ENCODE measurements at regions of chr6 and their contacts with region 1.

Region 1: GRCh38 chr6:16128759-16129622 is at the start of gene MYLIP:
- DNase-seq: peak; percentile 93 to 97 (median 96)
- ATAC-seq: peak; percentile 93
- H3K4me3 ChIP-seq: peak within 1 kb of the TSS; percentile 91
- H3K4me3 Mint-ChIP-seq: peak within 1 kb of the TSS; percentile 93 to 100 (median 96)
- H3K27ac ChIP-seq: peak within 1 kb of the TSS; percentile 97
- H3K27ac Mint-ChIP-seq: peak within 1 kb of the TSS; percentile 76 to 98 (median 95)
- H3K4me1 ChIP-seq: peaks cover 30 to 39% of the 10 kb centered on the region in 2 donors
- H3K4me1 Mint-ChIP-seq: peaks cover 20 to 50% (median 35%) of the 10 kb centered on the region in 7 donors
- H3K27me3 ChIP-seq: no peaks in the 10 kb centered on the region
- H3K27me3 Mint-ChIP-seq: peaks cover 0 to 25% (median 0%) of the 10 kb centered on the region in 5 donors
- total RNA-seq, gene MYLIP: 17.8 to 215 (median 23.0) TPM

Region 2: GRCh38 chr6:14276667-14277404 is 1852.2 kb before region 1 on chr6:
- CTCF ChIA-PET with region 1: no interaction called
- POLR2A ChIA-PET with region 1: no interaction called
- intact Hi-C with region 1: loop called in 1 of 2 experiments (anchors 10 kb)
- DNase-seq: peak in 7 of 9 donors; percentile 73 to 90 (median 85)
- ATAC-seq: peak; percentile 99
- H3K4me3 ChIP-seq: peak overlapping the region; percentile 34
- H3K4me3 Mint-ChIP-seq: peak overlapping the region; percentile 72 to 96 (median 80)
- H3K27ac ChIP-seq: peak overlapping the region; percentile 47
- H3K27ac Mint-ChIP-seq: peak overlapping the region; percentile 82 to 97 (median 91)
- H3K4me1 ChIP-seq: peaks cover 20 to 39% of the 10 kb centered on the region in 2 donors
- H3K4me1 Mint-ChIP-seq: peaks cover 33 to 64% (median 55%) of the 10 kb centered on the region in 7 donors
- H3K27me3 ChIP-seq: no peaks in the 10 kb centered on the region
- H3K27me3 Mint-ChIP-seq: no peaks in the 10 kb centered on the region

Region 3: GRCh38 chr6:15691250-15691869 is 437.6 kb before region 1 on chr6:
- CTCF ChIA-PET with region 1: interaction called, 3 read pairs
- POLR2A ChIA-PET with region 1: interaction called, 3 read pairs
- intact Hi-C with region 1: loop called (anchors 1 kb)
- DNase-seq: peak; percentile 56 to 84 (median 76)
- ATAC-seq: peak; percentile 100
- H3K4me3 ChIP-seq: no peak overlapping the region
- H3K4me3 Mint-ChIP-seq: peak overlapping the region in 2 of 10 donors; percentile 25 to 56
- H3K27ac ChIP-seq: no peak overlapping the region
- H3K27ac Mint-ChIP-seq: peak overlapping the region in 3 of 9 donors; percentile 1 to 23 (median 4)
- H3K4me1 ChIP-seq: no peaks in the 10 kb centered on the region
- H3K4me1 Mint-ChIP-seq: peaks cover 4 to 9% (median 7%) of the 10 kb centered on the region in 7 donors
- H3K27me3 ChIP-seq: no peaks in the 10 kb centered on the region
- H3K27me3 Mint-ChIP-seq: peaks cover 0 to 5% (median 0%) of the 10 kb centered on the region in 5 donors

Region 4: DNA sequence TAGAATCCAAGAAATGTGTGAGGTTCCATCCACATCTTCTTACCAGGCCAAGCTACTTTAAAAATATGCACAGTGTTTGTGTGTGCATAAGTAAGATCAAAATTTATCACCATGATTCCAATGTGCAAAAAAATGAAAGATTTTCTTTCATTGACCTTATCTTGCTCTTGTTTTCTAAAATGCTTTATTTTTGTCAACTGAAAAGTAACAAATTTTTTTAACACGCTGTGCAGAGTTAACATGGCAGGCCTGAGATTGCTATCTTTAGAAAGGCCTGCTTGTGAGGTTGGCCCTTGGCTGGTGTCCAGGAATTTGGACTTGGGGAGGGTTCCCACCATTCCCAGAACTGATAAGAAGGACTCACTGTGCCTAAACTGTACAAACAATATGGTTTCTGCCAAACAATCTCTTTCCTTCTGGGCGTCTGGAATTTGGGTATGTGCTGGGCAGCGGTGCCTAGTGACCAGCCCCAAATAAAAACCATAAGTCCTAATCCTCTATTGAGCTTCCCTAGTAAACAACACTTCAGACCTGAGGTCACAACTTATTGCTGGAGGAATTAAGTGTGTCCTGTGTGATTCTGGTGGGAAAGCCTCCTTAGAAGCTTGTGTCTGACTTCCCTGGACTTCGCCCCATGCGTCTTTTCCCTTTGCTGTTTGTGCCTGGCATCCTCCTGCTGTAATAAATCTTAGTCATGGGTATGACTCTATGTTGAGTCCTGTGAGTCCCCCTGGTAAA is 19.9 kb before region 1 on chr6:
- CTCF ChIA-PET with region 1: no interaction called
- POLR2A ChIA-PET with region 1: interaction called, 11 read pairs
- intact Hi-C with region 1: no loop called
- DNase-seq: no peak
- ATAC-seq: no peak
- H3K4me3 ChIP-seq: no peak overlapping the region
- H3K4me3 Mint-ChIP-seq: no peak overlapping the region
- H3K27ac ChIP-seq: no peak overlapping the region
- H3K27ac Mint-ChIP-seq: no peak overlapping the region
- H3K4me1 ChIP-seq: no peaks in the 10 kb centered on the region
- H3K4me1 Mint-ChIP-seq: peaks cover 0 to 3% (median 0%) of the 10 kb centered on the region in 7 donors
- H3K27me3 ChIP-seq: no peaks in the 10 kb centered on the region
- H3K27me3 Mint-ChIP-seq: peaks cover 0 to 10% (median 0%) of the 10 kb centered on the region in 5 donors

Region 5: GRCh38 chr6:16206595-16207037 is 77.6 kb after region 1 on chr6:
- CTCF ChIA-PET with region 1: no interaction called
- POLR2A ChIA-PET with region 1: no interaction called
- intact Hi-C with region 1: loop called (anchors 1 to 2 kb)
- DNase-seq: peak in 7 of 9 donors; percentile 19 to 63 (median 54)
- ATAC-seq: peak; percentile 86
- H3K4me3 ChIP-seq: no peak overlapping the region
- H3K4me3 Mint-ChIP-seq: no peak overlapping the region
- H3K27ac ChIP-seq: no peak overlapping the region
- H3K27ac Mint-ChIP-seq: peak overlapping the region in 1 of 9 donors; percentile 48
- H3K4me1 ChIP-seq: no peaks in the 10 kb centered on the region
- H3K4me1 Mint-ChIP-seq: peaks cover 0 to 6% (median 0%) of the 10 kb centered on the region in 7 donors
- H3K27me3 ChIP-seq: no peaks in the 10 kb centered on the region
- H3K27me3 Mint-ChIP-seq: peaks cover 5 to 25% (median 19%) of the 10 kb centered on the region in 5 donors

Region 6: GRCh38 chr6:16224409-16224808 is 95.4 kb after region 1 on chr6:
- CTCF ChIA-PET with region 1: no interaction called
- POLR2A ChIA-PET with region 1: no interaction called
- intact Hi-C with region 1: no loop called
- DNase-seq: no peak
- ATAC-seq: peak; percentile 69
- H3K4me3 ChIP-seq: no peak overlapping the region
- H3K4me3 Mint-ChIP-seq: no peak overlapping the region
- H3K27ac ChIP-seq: no peak overlapping the region
- H3K27ac Mint-ChIP-seq: no peak overlapping the region
- H3K4me1 ChIP-seq: no peaks in the 10 kb centered on the region
- H3K4me1 Mint-ChIP-seq: peaks cover 0 to 2% (median 0%) of the 10 kb centered on the region in 7 donors
- H3K27me3 ChIP-seq: no peaks in the 10 kb centered on the region
- H3K27me3 Mint-ChIP-seq: peaks cover 0 to 7% (median 3%) of the 10 kb centered on the region in 5 donors

Region 7: DNA sequence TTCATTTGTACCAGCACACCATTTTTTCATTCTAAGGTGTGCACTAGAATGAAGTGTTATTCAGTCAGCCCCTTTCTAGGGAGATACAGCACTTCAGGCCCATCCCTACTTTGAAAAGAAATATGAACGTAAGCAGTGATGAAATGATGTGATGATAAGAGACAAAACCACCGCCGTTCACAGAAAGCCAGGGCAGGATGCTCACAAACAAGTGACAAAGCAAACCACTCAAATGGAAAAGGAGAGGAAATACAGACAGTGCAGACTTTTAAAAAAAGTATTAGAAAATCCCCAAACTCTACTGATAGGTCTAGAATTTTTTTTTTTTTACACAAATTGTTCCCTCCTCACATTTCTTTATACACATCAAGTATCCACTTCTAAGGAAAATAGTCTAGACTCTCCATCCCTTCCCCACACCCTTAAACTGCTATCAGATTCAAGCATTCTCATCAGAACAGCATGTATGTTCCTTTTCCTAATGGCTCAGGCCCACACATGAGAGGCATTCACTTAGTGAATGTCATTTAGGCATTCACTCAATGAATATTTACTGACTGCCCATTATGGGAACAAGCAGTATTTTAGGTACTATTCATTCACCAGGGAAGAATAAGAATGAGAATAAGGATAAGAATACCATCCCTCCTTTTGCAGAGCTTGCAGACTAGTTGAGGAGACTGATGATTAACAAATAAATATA is 352.9 kb after region 1 on chr6:
- CTCF ChIA-PET with region 1: no interaction called
- POLR2A ChIA-PET with region 1: no interaction called
- intact Hi-C with region 1: loop called (anchors 5 to 10 kb)
- DNase-seq: peak in 8 of 9 donors; percentile 51 to 90 (median 83)
- ATAC-seq: peak; percentile 86
- H3K4me3 ChIP-seq: no peak overlapping the region
- H3K4me3 Mint-ChIP-seq: peak overlapping the region in 9 of 10 donors; percentile 1 to 70 (median 46)
- H3K27ac ChIP-seq: peak overlapping the region; percentile 75
- H3K27ac Mint-ChIP-seq: peak overlapping the region; percentile 64 to 96 (median 91)
- H3K4me1 ChIP-seq: peaks cover 33 to 64% of the 10 kb centered on the region in 2 donors
- H3K4me1 Mint-ChIP-seq: peaks cover 29 to 87% (median 56%) of the 10 kb centered on the region in 7 donors
- H3K27me3 ChIP-seq: no peaks in the 10 kb centered on the region
- H3K27me3 Mint-ChIP-seq: no peaks in the 10 kb centered on the region

Region 8: GRCh38 chr6:17599885-17600526 is 1471.0 kb after region 1 on chr6 and contains the start of gene FAM8A1:
- CTCF ChIA-PET with region 1: no interaction called
- POLR2A ChIA-PET with region 1: no interaction called
- intact Hi-C with region 1: loop called in 1 of 2 experiments (anchors 2 kb)
- DNase-seq: peak; percentile 91 to 97 (median 94)
- ATAC-seq: peak; percentile 97
- H3K4me3 ChIP-seq: peak within 1 kb of the TSS; percentile 49
- H3K4me3 Mint-ChIP-seq: peak within 1 kb of the TSS; percentile 85 to 97 (median 94)
- H3K27ac ChIP-seq: peak within 1 kb of the TSS; percentile 94
- H3K27ac Mint-ChIP-seq: peak within 1 kb of the TSS; percentile 84 to 96 (median 93)
- H3K4me1 ChIP-seq: peaks cover 19 to 29% of the 10 kb centered on the region in 2 donors
- H3K4me1 Mint-ChIP-seq: peaks cover 29 to 48% (median 45%) of the 10 kb centered on the region in 7 donors
- H3K27me3 ChIP-seq: no peaks in the 10 kb centered on the region
- H3K27me3 Mint-ChIP-seq: no peaks in the 10 kb centered on the region
- total RNA-seq, gene FAM8A1: 8.0 to 26.1 (median 21.1) TPM